Calu3 (cell line): ENCODE measurements at regions of chr11 and their contacts with region 1.

Region 1: DNA sequence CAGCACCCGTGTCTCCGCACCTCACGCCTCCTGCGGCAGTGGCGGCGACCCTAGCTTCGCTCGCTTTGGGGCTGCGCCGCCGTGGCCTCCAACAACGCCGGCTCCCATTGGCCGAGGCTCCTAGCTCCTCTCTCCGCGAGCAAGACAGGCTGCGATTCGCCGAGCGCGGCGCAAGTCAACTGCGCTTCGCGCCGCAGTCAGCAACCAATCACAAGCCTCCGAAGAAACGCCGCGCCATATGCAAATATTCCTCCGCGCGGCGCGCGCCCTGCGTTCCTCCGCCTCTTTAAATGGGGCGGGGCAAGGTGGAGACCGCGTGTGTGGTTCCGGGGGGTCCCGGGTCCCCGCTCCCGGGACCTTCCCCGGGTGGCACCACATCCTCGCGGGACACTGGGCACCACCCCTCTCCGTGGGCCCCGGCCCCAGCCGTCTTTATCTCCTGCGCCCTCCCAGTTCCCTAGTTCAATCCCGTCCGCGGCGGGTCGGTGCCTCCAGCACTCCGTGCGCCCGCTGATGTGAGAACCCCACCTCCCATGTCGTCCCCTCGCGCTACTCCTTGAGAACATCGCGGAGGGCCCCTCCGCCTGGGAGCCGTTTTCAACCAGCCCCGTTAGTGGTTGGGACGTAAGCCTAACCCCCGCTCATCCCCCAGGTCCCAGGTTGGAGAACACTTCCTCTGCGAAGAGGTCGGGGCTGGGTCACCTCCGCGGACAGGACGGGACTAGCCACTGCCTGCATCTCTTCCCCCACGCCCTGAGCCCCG is at the start of gene NAP1L4:
- DNase-seq: peak; percentile 95
- H3K4me3 Mint-ChIP-seq: peak within 1 kb of the TSS; percentile 98
- H3K27ac Mint-ChIP-seq: peak within 1 kb of the TSS; percentile 97
- H3K4me1 Mint-ChIP-seq: peaks cover 18% of the 10 kb centered on the region
- H3K27me3 Mint-ChIP-seq: no peaks in the 10 kb centered on the region
- CTCF ChIP-seq: no peak
- total RNA-seq, gene NAP1L4: 140 and 150 TPM in 2 replicates

Region 2: GRCh38 chr11:2444821-2445745 is 547.3 kb before region 1 on chr11 and contains the start of gene KCNQ1:
- CTCF ChIA-PET with region 1: no interaction called
- intact Hi-C with region 1: loop called (anchors 5 kb)
- DNase-seq: peak; percentile 89
- H3K4me3 Mint-ChIP-seq: peak within 1 kb of the TSS; percentile 76
- H3K27ac Mint-ChIP-seq: no peak within 1 kb of the TSS
- H3K4me1 Mint-ChIP-seq: peaks cover 16% of the 10 kb centered on the region
- H3K27me3 Mint-ChIP-seq: peaks cover 39% of the 10 kb centered on the region
- CTCF ChIP-seq: no peak
- total RNA-seq, gene KCNQ1: 7.4 and 9.2 TPM in 2 replicates

Region 3: GRCh38 chr11:2750682-2751387 is 241.6 kb before region 1 on chr11:
- CTCF ChIA-PET with region 1: no interaction called
- intact Hi-C with region 1: no loop called
- DNase-seq: no peak
- H3K4me3 Mint-ChIP-seq: no peak overlapping the region
- H3K27ac Mint-ChIP-seq: no peak overlapping the region
- H3K4me1 Mint-ChIP-seq: no peaks in the 10 kb centered on the region
- H3K27me3 Mint-ChIP-seq: peaks cover 63% of the 10 kb centered on the region
- CTCF ChIP-seq: no peak

Region 4: DNA sequence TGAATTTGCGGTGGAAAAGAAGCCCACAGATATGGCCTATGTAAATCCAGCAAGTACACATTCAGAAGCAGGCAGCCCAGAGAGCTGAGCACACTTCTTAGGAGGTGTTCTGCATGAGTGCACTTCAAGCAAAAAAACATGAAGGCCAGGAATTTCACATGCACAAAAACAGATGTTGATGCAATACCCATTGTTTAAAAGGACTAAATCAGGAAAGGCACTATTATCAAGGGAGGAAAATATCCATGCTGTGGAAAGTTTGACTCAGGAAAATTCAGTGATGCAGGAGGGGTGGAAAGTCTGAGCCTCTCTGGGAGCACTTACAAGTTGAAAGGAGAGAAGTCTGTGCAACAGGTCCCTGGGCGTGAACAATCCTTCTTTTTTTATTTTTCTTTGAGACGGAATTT is 80.6 kb after region 1 on chr11:
- CTCF ChIA-PET with region 1: no interaction called
- intact Hi-C with region 1: no loop called
- DNase-seq: no peak
- H3K4me3 Mint-ChIP-seq: no peak overlapping the region
- H3K27ac Mint-ChIP-seq: no peak overlapping the region
- H3K4me1 Mint-ChIP-seq: no peaks in the 10 kb centered on the region
- H3K27me3 Mint-ChIP-seq: peaks cover 54% of the 10 kb centered on the region
- CTCF ChIP-seq: no peak